Calu3 (cell line): ENCODE measurements at regions of chr16 and their contacts with region 1.

Region 1: DNA sequence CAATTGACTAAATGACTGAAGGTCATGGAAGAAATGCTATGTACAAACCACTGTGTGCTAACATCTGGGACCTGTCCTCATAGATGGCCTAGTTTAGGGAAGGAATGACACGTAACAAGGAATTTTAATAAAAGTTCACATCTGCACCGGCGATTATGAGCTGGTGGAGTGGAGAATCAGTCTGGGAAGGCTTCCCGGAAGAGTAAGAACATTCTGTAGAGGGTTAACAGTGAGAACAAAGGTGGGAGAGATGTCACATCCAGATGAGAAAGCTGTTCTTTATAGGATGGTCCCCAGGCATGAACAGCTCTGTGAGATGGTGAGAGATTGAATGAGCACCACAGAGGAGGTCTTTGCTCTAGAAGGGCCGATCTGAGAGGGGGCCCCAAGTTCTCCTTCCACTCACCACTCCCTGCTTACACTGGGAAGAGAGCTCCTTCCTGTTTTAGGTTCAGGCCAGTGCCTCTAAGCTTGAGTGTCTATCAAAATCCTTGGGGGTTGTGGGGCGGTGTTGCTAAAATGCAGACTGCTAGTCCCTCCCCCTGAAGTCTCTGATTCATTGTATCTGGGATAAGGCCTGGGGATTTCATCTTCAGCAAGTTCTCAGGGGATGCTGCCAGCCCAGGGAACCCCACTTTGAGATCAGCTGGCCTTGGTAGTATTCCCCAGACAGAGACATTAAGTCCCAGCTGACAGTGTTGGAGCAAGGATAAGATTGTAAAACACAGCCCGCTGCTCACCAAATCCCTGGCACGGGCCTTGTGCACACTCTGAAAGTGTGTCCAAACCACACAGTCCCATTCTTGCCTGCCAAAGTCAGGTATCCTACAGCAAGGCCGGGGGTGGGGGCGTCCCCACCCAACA is 294.7 kb upstream of the MAF start:
- DNase-seq: no peak
- H3K4me3 Mint-ChIP-seq: no peak overlapping the region
- H3K27ac Mint-ChIP-seq: no peak overlapping the region
- H3K4me1 Mint-ChIP-seq: peaks cover 20% of the 10 kb centered on the region
- H3K27me3 Mint-ChIP-seq: no peaks in the 10 kb centered on the region
- CTCF ChIP-seq: no peak

Region 2: DNA sequence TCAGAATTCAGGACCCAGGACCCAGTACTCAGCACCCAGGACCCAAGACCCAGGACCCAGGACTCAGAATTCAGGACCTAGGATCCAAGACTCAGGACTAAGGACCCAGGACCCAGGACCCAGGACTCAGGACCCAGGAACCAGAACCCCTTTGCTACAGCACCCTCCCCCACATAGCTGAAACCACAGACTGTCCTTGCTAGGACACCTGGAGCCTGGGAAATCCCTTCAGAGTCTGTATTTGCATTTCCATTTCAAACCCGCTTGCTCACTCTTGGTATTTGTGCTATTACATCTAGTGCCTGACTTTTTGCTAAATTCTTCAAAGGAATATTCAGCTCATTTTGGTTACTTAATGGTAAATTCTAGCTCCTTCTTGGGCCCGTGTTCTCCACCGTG is 19.0 kb before region 1 on chr16:
- CTCF ChIA-PET with region 1: interaction called, 10 read pairs
- intact Hi-C with region 1: no loop called
- DNase-seq: no peak
- H3K4me3 Mint-ChIP-seq: no peak overlapping the region
- H3K27ac Mint-ChIP-seq: no peak overlapping the region
- H3K4me1 Mint-ChIP-seq: no peaks in the 10 kb centered on the region
- H3K27me3 Mint-ChIP-seq: no peaks in the 10 kb centered on the region
- CTCF ChIP-seq: no peak